Caco-2 (cell line): ENCODE measurements at regions of chr2 and their contacts with region 1.

Region 1: DNA sequence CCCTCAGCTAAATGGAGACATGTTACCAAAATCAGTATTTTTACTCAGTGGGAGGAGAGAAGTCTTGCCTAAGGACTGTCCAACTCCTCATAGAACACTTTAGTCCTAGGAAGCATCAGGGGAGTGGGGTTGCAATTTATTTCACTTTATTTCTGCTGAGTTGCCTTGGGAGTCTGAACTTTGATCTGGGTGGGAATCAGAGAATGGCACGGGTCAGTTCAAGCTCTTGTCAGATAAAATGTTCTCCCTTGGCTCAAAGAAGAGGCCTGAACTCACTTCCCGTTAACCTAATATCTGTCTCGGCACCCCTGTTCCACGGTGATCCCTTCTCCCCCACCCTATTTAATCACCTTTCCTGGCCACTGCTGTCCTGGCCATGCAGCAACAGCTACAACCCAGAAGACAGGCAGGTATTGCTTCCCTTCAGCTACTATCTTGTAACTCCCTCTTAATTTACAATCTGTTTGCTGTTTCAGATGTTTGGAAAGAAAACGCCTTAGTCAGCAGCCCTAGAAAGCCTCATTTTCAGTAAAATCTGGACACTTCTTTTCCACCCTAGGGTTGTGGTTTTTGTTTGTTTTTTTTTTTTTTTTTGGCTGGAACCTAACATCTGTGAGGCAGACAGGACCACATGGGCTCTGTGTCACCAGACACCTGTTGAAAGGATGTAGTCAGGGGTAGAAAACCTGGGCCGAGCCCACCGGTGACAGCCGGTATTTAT is 52.5 kb downstream of the SERTAD2 start:
- DNase-seq: no peak
- H3K4me3 ChIP-seq: no peak overlapping the region
- H3K4me3 Mint-ChIP-seq: no peak overlapping the region
- H3K27ac Mint-ChIP-seq: peak overlapping the region; percentile 31
- H3K4me1 ChIP-seq: peaks cover 7% of the 10 kb centered on the region
- H3K4me1 Mint-ChIP-seq: peaks cover 10% of the 10 kb centered on the region
- H3K27me3 ChIP-seq: no peaks in the 10 kb centered on the region
- H3K27me3 Mint-ChIP-seq: no peaks in the 10 kb centered on the region
- CTCF ChIP-seq: no peak

Region 2: GRCh38 chr2:64548761-64549160 is 52.4 kb before region 1 on chr2:
- CTCF ChIA-PET with region 1: no interaction called
- POLR2A ChIA-PET with region 1: no interaction called
- intact Hi-C with region 1: no loop called
- DNase-seq: no peak
- H3K4me3 ChIP-seq: no peak overlapping the region
- H3K4me3 Mint-ChIP-seq: no peak overlapping the region
- H3K27ac Mint-ChIP-seq: no peak overlapping the region
- H3K4me1 ChIP-seq: no peaks in the 10 kb centered on the region
- H3K4me1 Mint-ChIP-seq: peaks cover 6% of the 10 kb centered on the region
- H3K27me3 ChIP-seq: no peaks in the 10 kb centered on the region
- H3K27me3 Mint-ChIP-seq: no peaks in the 10 kb centered on the region
- CTCF ChIP-seq: no peak

Region 3: DNA sequence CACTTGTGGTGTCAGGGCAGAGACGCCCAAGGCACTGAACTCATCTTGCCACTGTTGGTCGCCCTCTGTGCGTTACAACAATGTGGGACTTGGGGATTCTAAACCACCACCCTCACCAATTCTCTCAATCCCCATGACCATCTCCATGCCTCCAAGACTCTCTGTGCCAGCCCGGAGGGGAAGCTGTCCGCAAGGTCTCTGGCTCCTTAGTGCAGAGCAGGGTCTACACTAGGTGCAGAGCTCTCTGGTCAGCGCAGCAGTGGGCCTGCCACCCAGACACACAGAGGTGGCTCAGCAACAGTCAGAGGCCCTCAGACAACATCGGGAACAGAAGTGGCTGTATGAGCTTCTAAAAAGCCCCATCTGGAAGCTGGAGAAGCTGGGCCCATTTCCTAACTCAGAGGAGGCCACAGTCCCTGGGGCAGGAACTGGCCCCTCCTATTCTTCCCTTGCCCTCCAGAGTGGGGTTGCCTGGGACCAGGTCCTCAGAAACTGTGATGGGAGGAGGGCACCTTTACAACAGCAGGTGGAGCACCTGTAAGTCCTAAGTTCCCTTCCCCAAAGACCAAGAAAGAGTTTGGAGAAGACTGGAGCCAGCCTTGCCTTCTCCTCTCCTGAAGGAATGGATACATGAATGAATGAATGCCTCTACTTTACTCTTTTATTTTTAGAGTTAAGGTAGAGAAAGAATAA is 14.8 kb after region 1 on chr2:
- CTCF ChIA-PET with region 1: interaction called, 3 read pairs
- POLR2A ChIA-PET with region 1: interaction called, 10 read pairs
- intact Hi-C with region 1: no loop called
- DNase-seq: no peak
- H3K4me3 ChIP-seq: no peak overlapping the region
- H3K4me3 Mint-ChIP-seq: no peak overlapping the region
- H3K27ac Mint-ChIP-seq: no peak overlapping the region
- H3K4me1 ChIP-seq: no peaks in the 10 kb centered on the region
- H3K4me1 Mint-ChIP-seq: peaks cover 6% of the 10 kb centered on the region
- H3K27me3 ChIP-seq: no peaks in the 10 kb centered on the region; the same call in 1 of the 2 replicates
- H3K27me3 Mint-ChIP-seq: no peaks in the 10 kb centered on the region
- CTCF ChIP-seq: no peak

Region 4: DNA sequence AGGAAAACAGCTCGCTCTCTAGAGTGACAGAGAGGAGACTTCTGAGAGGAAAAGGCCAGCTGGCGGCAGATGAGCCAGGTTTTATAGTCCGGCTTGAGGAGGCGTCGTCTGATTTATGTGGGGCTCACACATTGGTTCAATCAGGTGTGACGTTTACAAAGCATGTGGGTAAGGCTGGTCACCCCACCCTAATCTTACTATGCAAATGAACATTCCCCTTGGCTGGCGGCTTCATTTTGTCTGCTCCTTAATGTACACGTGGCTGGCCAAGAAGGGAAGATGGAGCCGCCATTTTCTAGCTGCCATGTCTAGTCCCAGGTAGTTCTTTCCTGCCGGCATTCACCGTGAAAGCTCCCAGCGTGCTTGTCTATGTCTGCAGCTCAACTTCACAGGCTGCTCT is 1130.3 kb after region 1 on chr2:
- CTCF ChIA-PET with region 1: no interaction called
- POLR2A ChIA-PET with region 1: no interaction called
- intact Hi-C with region 1: no loop called
- DNase-seq: no peak
- H3K4me3 ChIP-seq: no peak overlapping the region
- H3K4me3 Mint-ChIP-seq: no peak overlapping the region
- H3K27ac Mint-ChIP-seq: no peak overlapping the region
- H3K4me1 ChIP-seq: no peaks in the 10 kb centered on the region
- H3K4me1 Mint-ChIP-seq: no peaks in the 10 kb centered on the region
- H3K27me3 ChIP-seq: no peaks in the 10 kb centered on the region; the same call in 1 of the 2 replicates
- H3K27me3 Mint-ChIP-seq: no peaks in the 10 kb centered on the region
- CTCF ChIP-seq: no peak